ENCODE measurements at regions of chr6 and their contacts with region 1.

Region 1: GRCh38 chr6:149934249-149935156 is 7.3 kb upstream of the ULBP2 start:
- DNase-seq: peak; percentile 46
- ATAC-seq: peak; percentile 74

Region 2: DNA sequence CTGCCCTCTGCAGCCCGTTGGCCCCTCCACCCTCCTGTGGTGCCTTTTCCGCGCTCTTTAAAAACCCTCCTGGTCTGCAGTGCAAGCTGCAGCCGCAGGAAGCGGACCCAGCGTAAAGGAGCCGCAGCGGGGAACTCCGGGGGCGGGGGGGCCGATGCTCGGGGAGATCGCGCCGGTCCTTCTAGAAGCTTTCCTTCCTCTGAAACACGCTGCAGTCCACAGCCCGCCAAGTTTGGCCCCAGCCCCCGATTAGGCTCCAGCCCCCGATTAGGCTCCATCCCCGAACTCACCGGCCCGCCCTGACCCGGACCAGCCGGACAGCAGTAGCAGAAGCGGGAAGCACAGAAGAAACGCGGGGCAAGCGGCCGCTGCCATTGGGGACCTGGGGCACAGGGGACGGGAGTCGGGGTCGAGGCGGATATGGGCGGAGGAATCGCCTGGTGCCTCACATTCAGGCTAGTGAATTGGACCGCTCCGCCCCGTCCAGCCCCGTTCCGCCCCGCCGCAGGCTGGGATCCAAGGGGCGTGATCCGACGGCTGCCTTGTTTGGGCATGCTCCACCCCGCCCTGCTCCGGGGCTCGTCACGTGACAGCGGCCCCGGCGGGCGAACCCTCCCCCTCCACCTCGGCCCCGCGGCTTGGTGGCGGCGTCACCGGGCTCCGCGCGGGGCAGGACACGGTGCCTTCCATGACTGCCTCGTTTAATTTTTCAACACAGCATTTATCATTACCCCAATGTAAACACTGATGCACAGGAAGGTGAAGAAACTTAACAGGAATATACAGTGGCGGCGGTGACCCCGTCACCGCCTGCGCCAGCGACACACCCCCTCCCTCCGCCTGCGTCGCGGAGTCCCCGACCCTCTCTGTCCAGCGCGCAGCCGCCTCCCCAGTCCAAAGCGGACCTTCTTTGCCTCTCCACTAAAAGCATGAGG is 70.5 kb after region 1 on chr6:
- intact Hi-C with region 1: loop called (anchors 5 kb)
- DNase-seq: peak; percentile 96
- ATAC-seq: peak; percentile 99

Region 3: GRCh38 chr6:150016324-150017185 is 82.1 kb after region 1 on chr6:
- intact Hi-C with region 1: loop called (anchors 5 kb)
- DNase-seq: peak; percentile 58
- ATAC-seq: peak; percentile 89

Measured in left ventricle myocardium superior (tissue), 1 donor.